PC-3 (cell line): ENCODE measurements at regions of chr13 and their contacts with region 1.

Region 1: DNA sequence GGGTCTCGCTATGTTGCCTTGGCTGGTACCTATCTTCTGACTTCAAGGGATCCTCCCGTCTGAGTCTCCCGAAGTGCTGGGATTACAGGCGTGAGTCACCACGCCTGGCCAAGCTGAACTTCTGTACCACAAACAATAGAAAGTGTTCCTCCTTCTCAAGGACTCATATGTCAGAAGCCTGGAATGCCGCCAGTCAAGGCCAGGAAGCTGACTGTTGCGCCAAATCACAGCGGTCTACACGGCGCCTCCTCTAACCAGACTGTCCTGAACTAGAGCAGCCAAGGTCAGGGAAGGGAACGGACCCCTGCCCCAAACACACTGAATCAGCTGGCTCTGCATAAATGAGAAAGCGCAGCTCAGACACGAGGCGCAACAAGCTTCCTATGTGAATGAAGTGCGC is 14.6 kb downstream of the RAB20 start:
- DNase-seq: peak; percentile 94
- ATAC-seq: peak; percentile 97
- H3K4me3 ChIP-seq: peak overlapping the region; percentile 39; the same call in 1 of the 2 replicates
- H3K27ac ChIP-seq: peak overlapping the region; percentile 67
- H3K4me1 ChIP-seq: peaks cover 23% of the 10 kb centered on the region
- H3K27me3 ChIP-seq: no peaks in the 10 kb centered on the region
- CTCF ChIP-seq: no peak

Region 2: GRCh38 chr13:109654341-109655205 is 892.4 kb before region 1 on chr13:
- CTCF ChIA-PET with region 1: no interaction called
- POLR2A ChIA-PET with region 1: no interaction called
- intact Hi-C with region 1: no loop called
- DNase-seq: no peak
- ATAC-seq: no peak
- H3K4me3 ChIP-seq: no peak overlapping the region
- H3K27ac ChIP-seq: no peak overlapping the region
- H3K4me1 ChIP-seq: peaks cover 1% of the 10 kb centered on the region; the same call in 1 of the 2 replicates
- H3K27me3 ChIP-seq: no peaks in the 10 kb centered on the region
- CTCF ChIP-seq: no peak

Region 3: GRCh38 chr13:110168999-110169933 is 377.7 kb before region 1 on chr13:
- CTCF ChIA-PET with region 1: no interaction called
- POLR2A ChIA-PET with region 1: no interaction called
- intact Hi-C with region 1: no loop called
- DNase-seq: no peak
- ATAC-seq: no peak
- H3K4me3 ChIP-seq: no peak overlapping the region
- H3K27ac ChIP-seq: no peak overlapping the region
- H3K4me1 ChIP-seq: peaks cover 9% of the 10 kb centered on the region; the same call in 1 of the 2 replicates
- H3K27me3 ChIP-seq: no peaks in the 10 kb centered on the region
- CTCF ChIP-seq: no peak

Region 4: GRCh38 chr13:110340812-110341444 is 206.0 kb before region 1 on chr13:
- CTCF ChIA-PET with region 1: no interaction called
- POLR2A ChIA-PET with region 1: no interaction called
- intact Hi-C with region 1: no loop called
- DNase-seq: no peak
- ATAC-seq: no peak
- H3K4me3 ChIP-seq: no peak overlapping the region
- H3K27ac ChIP-seq: no peak overlapping the region
- H3K4me1 ChIP-seq: peaks cover 35% of the 10 kb centered on the region
- H3K27me3 ChIP-seq: no peaks in the 10 kb centered on the region
- CTCF ChIP-seq: no peak

Region 5: GRCh38 chr13:110455941-110456340 is 91.0 kb before region 1 on chr13:
- CTCF ChIA-PET with region 1: no interaction called
- POLR2A ChIA-PET with region 1: no interaction called
- intact Hi-C with region 1: loop called (anchors 5 kb)
- DNase-seq: peak; percentile 78
- ATAC-seq: peak; percentile 99
- H3K4me3 ChIP-seq: peak overlapping the region; percentile 43; the same call in 1 of the 2 replicates
- H3K27ac ChIP-seq: no peak overlapping the region
- H3K4me1 ChIP-seq: peaks cover 7% of the 10 kb centered on the region; the same call in 1 of the 2 replicates
- H3K27me3 ChIP-seq: no peaks in the 10 kb centered on the region
- CTCF ChIP-seq: peak; percentile 88

Region 6: DNA sequence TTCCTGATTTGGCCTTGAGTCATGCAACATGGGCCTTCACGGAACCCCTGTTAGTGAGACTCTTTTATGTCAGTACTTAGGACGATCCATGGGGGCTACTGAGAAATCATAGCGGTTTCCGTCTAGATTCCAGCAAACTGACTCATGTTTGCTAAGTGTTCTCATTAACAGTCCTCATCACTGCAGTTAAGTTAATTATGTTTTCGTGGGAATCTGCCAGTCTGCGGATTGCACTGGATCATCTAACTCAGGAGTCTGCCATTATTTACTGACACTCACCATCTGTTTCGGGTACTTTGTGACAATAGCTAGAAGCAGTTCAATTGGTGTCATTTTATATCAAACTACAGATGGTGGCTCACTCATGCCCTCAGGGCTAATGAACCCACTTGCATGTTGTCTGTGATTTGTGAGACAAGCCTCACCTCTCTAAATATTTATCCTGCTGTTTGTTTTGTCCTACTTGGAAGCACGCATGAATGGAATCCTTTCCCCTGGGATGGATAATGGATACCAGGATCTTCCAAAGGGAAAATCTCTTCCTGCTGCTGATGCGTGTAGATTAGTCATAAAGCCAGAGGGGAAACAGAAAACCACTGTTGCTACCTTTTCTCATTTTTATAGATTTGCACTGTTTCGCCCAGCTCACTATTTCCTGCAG is 47.2 kb before region 1 on chr13:
- CTCF ChIA-PET with region 1: no interaction called
- POLR2A ChIA-PET with region 1: no interaction called
- intact Hi-C with region 1: loop called (anchors 5 kb)
- DNase-seq: peak; percentile 80
- ATAC-seq: peak; percentile 88
- H3K4me3 ChIP-seq: peak overlapping the region; percentile 25; the same call in 1 of the 2 replicates
- H3K27ac ChIP-seq: peak overlapping the region; percentile 98
- H3K4me1 ChIP-seq: peaks cover 24% of the 10 kb centered on the region
- H3K27me3 ChIP-seq: no peaks in the 10 kb centered on the region
- CTCF ChIP-seq: no peak